ENCODE measurements at regions of chr3 and their contacts with region 1.

Region 1: DNA sequence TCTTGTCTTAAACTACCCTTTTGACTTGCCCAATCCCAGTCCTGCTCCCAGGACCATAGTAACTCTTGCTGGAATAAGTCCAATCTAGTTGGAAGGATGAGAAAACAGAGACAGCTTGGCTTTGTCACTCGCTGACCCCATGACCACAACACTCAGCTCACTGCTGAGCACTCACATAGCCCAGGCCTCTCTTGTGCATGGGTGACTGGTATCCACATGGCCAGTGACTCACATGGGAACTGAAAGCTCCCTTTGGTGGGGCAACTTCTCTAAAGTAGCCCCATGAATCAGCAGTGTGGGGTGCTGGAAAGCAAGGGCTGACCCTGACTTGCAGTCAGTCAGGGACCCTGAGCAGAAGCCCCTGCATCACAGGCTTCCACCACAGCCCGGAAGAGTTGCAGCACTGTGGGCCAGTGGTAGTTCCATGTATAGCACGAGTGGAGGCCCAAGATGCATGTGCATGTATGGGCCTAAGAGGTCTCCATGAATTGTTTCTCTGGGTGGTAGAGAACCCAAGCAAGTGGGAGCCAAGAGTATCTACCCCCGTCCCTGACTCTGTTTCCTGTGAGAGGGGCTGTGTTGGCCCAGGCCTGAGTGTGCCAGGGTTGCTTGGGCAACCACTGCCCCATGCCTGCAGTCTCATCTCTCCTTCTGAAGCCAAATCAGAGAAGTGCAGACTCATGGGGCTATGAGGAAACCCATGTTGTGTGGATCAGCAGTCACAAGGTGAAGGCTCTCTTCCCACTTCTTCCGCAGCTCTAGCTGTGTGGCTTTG is 62.1 kb upstream of the XCR1 start:
- DNase-seq: no peak
- H3K4me3 Mint-ChIP-seq: no peak overlapping the region
- H3K27ac Mint-ChIP-seq: no peak overlapping the region
- H3K4me1 Mint-ChIP-seq: peaks cover 46% of the 10 kb centered on the region
- H3K27me3 Mint-ChIP-seq: peaks cover 63% of the 10 kb centered on the region

Region 2: DNA sequence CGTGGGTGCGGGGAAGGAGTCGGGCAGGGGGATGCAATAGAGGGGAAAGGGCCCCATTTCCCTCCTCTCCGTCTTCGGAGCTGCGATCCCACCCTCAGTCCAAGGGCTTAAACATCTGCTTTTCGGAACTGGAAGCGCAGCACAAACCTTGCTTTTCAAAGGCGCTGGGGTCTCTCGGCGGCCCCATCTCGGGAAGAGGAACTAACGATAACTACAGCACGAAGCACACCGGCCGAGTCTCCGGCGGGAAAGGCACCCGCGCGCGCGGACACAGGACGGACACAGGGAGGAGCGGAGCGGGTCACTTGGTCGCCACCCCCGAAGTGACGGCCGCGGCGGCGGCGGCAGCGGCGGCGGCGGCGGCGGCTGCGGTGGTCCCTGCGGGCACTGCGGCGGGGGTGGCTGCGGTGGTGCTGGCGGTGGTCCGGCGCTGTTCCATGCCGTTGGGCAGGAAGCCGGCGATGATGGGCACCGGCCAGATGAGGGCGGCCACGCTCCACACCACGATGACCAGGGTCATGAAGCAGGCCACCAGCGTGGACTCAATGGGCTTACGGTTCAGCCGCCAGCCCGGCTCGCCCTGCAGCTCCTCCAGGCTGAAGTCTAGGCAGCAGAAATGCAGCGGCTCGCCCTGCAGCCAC is 864.5 kb before region 1 on chr3:
- intact Hi-C with region 1: loop called (anchors 10 kb)
- DNase-seq: peak; percentile 13
- H3K4me3 Mint-ChIP-seq: peak overlapping the region; percentile 84
- H3K27ac Mint-ChIP-seq: peak overlapping the region; percentile 62
- H3K4me1 Mint-ChIP-seq: peaks cover 14% of the 10 kb centered on the region
- H3K27me3 Mint-ChIP-seq: peaks cover 77% of the 10 kb centered on the region

Region 3: GRCh38 chr3:46049116-46049515 is 40.3 kb before region 1 on chr3:
- intact Hi-C with region 1: no loop called
- DNase-seq: no peak
- H3K4me3 Mint-ChIP-seq: no peak overlapping the region
- H3K27ac Mint-ChIP-seq: no peak overlapping the region
- H3K4me1 Mint-ChIP-seq: peaks cover 35% of the 10 kb centered on the region
- H3K27me3 Mint-ChIP-seq: peaks cover 27% of the 10 kb centered on the region